ENCODE measurements at regions of chr19 and their contacts with region 1.

Region 1: DNA sequence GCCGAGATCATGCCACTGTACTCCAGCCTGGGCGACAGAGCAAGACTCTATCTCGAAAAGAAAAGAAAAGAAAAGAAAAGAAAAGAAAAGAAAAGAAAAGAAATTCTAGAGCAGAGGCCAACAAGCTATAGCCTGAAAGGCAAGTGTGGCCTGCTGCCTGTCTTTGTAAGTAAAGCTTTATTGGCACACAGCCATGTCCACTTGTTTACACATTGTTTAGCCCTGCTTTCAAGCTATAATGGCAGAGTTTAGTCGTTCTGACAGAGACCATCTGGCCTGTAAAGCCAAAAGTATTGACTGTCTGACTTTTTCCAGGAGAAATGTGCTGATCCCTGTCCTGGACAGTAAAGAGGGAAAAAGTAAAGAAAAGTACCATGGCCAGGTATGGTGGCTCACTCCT is 18.3 kb downstream of the NWD1 start:
- DNase-seq: no peak
- H3K4me3 Mint-ChIP-seq: no peak overlapping the region
- H3K27ac Mint-ChIP-seq: peak overlapping the region; percentile 63
- H3K4me1 Mint-ChIP-seq: peaks cover 13% of the 10 kb centered on the region
- H3K27me3 Mint-ChIP-seq: no peaks in the 10 kb centered on the region
- CTCF ChIP-seq: no peak

Region 2: DNA sequence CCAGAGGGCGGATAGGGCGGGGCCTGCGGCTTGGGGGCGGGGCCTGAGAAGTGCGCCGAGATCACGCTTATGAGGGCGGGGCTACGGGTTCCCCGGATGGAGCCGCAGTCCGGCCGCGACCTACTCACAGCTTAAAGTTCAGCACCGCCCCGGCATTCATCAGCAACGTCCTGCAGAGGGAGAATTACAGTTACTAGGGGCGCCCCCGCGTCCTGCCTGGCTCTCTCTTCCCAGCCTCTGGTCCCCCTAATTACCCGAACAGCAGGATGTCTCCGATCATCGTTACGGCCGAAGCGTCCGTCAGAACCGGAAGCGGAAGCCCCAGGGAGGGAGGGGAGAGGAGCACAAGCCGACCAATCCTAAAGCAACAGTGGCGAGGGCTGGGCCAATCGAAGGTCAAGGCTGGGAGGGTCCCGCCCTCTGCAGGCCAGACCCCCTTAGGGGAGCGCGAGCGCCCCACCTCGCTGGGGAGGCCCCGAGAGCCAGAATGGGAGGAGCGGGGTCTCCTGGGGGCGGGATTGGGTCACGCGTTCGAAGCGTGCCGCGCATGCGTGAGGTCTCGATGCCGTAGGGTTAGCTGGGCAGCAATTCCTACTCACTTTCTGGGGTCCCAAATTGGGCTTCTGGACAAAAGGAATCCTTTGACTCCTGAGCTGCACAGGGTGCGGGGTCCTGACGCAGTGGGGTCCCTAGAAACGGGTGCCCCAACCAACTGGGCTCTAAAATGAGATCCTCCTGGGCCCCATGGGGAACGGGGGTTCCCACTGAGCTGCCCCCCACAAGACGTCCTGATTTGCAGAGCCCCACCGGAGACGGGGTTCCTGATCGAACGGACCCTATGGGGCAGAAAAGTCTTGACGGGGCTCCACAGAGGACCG is 77.8 kb before region 1 on chr19 and contains the start of gene SMIM7:
- CTCF ChIA-PET with region 1: interaction called, 4 read pairs
- POLR2A ChIA-PET with region 1: interaction called, 30 read pairs
- intact Hi-C with region 1: no loop called
- DNase-seq: peak; percentile 99
- H3K4me3 Mint-ChIP-seq: peak within 1 kb of the TSS; percentile 95
- H3K27ac Mint-ChIP-seq: peak within 1 kb of the TSS; percentile 94
- H3K4me1 Mint-ChIP-seq: peaks cover 7% of the 10 kb centered on the region
- H3K27me3 Mint-ChIP-seq: no peaks in the 10 kb centered on the region
- CTCF ChIP-seq: no peak
- total RNA-seq, gene SMIM7: 69.3 and 81.8 TPM in 2 replicates

Region 3: DNA sequence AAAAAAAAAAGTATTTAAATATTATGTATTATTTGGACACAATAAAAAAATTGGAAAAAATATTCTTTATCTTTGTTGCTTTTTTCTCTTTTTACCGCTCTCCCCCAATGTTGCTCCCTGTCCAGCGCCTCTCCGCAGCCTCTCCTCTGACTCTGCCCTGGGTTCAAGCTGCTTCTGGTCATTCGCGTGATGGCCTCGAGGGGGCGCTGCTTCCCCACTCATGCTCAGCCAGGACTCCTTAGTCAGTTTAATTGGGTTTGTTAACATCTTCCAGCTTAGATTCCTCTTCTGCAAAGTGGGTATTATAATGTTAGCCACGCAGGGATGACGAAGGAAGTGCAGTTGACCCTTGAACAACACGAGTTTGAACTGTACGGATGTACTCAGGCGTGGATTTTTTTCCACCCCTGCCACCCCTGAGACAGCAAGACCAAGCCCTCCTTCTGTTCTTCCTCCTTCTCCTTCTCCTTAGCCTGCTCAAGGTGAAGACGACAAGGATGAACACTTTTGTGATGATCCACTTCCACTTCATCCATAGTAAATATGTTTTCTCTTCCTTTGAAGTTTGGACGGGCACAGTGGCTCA is 23.1 kb before region 1 on chr19:
- CTCF ChIA-PET with region 1: interaction called, 11 read pairs
- POLR2A ChIA-PET with region 1: interaction called, 119 read pairs
- intact Hi-C with region 1: loop called (anchors 2 kb)
- DNase-seq: peak; percentile 76
- H3K4me3 Mint-ChIP-seq: peak overlapping the region; percentile 1
- H3K27ac Mint-ChIP-seq: no peak overlapping the region
- H3K4me1 Mint-ChIP-seq: peaks cover 11% of the 10 kb centered on the region
- H3K27me3 Mint-ChIP-seq: no peaks in the 10 kb centered on the region
- CTCF ChIP-seq: peak; percentile 98

Region 4: DNA sequence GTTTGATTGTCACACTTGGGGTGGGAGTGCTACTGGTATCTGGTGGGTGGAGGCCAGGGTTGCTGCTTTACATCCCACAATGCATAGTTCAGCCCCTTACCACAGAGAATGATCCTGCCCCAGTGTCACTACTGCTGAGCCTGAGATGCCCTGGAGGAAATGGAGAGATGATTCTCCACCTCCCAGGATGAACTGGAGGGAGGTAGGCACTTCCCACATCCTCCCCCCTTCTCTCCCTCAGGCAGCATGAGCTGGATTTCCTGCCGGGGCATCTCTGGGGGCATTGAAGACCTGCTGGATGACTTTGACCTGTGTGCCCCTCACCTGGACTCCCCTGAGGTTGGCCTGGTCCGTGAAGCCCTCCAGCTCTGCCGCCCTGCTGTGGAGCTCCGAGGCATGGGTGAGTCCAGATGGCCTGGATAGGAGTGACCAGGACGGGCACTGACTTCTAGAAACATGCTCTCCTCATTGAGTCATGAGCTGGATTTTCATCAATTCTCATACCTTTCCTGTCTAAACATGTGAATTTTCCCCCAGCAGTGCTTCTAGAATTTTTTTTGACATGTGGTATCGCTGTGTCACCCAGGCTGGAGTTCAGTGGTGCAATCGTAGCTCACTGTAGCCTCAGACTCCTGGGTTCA is 27.0 kb after region 1 on chr19:
- CTCF ChIA-PET with region 1: interaction called, 5 read pairs
- POLR2A ChIA-PET with region 1: interaction called, 36 read pairs
- intact Hi-C with region 1: loop called (anchors 5 kb)
- DNase-seq: peak; percentile 74
- H3K4me3 Mint-ChIP-seq: peak overlapping the region; percentile 63
- H3K27ac Mint-ChIP-seq: peak overlapping the region; percentile 81
- H3K4me1 Mint-ChIP-seq: peaks cover 14% of the 10 kb centered on the region
- H3K27me3 Mint-ChIP-seq: no peaks in the 10 kb centered on the region
- CTCF ChIP-seq: no peak

Region 5: GRCh38 chr19:16821094-16821493 is 83.2 kb after region 1 on chr19:
- CTCF ChIA-PET with region 1: no interaction called
- POLR2A ChIA-PET with region 1: no interaction called
- intact Hi-C with region 1: loop called (anchors 5 kb)
- DNase-seq: no peak
- H3K4me3 Mint-ChIP-seq: no peak overlapping the region
- H3K27ac Mint-ChIP-seq: no peak overlapping the region
- H3K4me1 Mint-ChIP-seq: peaks cover 27% of the 10 kb centered on the region
- H3K27me3 Mint-ChIP-seq: no peaks in the 10 kb centered on the region
- CTCF ChIP-seq: no peak

Region 6: DNA sequence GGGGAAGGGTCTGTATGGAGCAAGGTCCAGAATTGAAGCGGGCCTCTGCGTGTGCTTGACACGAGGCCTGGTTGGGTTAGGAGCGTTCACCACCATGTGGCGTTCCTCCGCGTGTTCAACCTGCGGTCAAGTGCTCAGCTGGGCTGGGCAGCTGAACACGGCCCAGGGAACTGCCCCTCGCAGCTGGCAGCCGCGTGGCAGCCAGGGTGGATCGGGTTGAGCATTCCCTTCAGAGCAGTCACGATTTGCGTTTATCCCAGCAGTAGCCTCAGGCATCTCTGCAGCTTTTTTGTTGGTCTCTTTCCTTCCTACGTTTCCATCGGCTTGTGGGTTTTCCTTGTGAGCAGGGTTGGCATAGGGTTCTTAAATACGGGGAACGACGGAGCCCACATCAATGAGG is 122.2 kb after region 1 on chr19:
- CTCF ChIA-PET with region 1: no interaction called
- POLR2A ChIA-PET with region 1: no interaction called
- intact Hi-C with region 1: no loop called
- DNase-seq: no peak
- H3K4me3 Mint-ChIP-seq: no peak overlapping the region
- H3K27ac Mint-ChIP-seq: no peak overlapping the region
- H3K4me1 Mint-ChIP-seq: no peaks in the 10 kb centered on the region
- H3K27me3 Mint-ChIP-seq: no peaks in the 10 kb centered on the region
- CTCF ChIP-seq: no peak